PC-3 (cell line): ENCODE measurements at regions of chr15 and their contacts with region 1.

Region 1: DNA sequence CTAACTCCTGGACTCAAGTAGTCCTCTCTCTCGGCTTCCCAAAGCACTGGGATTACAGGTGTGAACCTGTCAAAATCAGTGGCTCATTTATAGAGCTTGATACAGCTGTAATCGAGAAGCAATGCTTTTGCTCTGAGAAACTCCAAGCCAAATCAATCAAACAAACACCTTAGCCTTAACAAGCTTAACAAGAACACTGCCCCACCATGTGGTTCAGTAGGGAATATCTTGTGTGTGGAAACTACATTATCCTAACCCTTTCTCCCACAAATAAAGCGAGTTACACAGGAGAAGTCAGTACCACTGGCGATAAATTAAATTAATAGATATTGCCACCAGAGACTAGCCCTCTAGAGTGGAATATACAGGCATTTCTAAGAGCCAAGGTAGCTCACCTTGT is 13.9 kb downstream of the CDAN1 start:
- DNase-seq: peak; percentile 21
- ATAC-seq: peak; percentile 42
- H3K4me3 ChIP-seq: no peak overlapping the region
- H3K27ac ChIP-seq: no peak overlapping the region
- H3K4me1 ChIP-seq: peaks cover 4% of the 10 kb centered on the region; the same call in 1 of the 2 replicates
- H3K27me3 ChIP-seq: no peaks in the 10 kb centered on the region
- CTCF ChIP-seq: peak; percentile 54

Region 2: GRCh38 chr15:42704492-42704926 is 18.5 kb before region 1 on chr15:
- CTCF ChIA-PET with region 1: interaction called, 4 read pairs
- POLR2A ChIA-PET with region 1: no interaction called
- intact Hi-C with region 1: loop called (anchors 1 kb)
- DNase-seq: peak; percentile 90
- ATAC-seq: peak; percentile 94
- H3K4me3 ChIP-seq: no peak overlapping the region
- H3K27ac ChIP-seq: no peak overlapping the region
- H3K4me1 ChIP-seq: peaks cover 22% of the 10 kb centered on the region
- H3K27me3 ChIP-seq: no peaks in the 10 kb centered on the region
- CTCF ChIP-seq: peak; percentile 97

Region 3: DNA sequence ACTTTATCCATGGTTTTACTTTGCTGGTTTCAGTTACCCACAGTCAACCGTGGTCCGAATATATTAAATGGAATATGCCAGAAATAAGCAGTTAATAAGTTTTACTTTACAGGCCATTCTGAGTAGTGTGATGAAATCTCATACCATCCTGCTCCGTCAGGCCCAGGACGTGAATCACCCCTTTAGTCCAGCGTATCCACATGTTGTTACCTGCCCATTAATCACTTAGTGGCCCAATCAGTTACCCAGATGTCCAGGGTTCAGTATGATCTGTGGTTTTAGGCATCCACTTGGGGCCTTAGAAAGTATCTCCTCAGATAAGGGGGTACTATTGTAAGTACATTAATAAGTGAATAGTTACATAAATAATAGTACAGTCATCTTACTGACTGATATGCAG is 109.5 kb after region 1 on chr15:
- CTCF ChIA-PET with region 1: no interaction called
- POLR2A ChIA-PET with region 1: no interaction called
- intact Hi-C with region 1: no loop called
- DNase-seq: peak; percentile 83
- ATAC-seq: peak; percentile 100
- H3K4me3 ChIP-seq: no peak overlapping the region
- H3K27ac ChIP-seq: 0 out of 2 replicates have a peak overlapping the region, but pooled peaks have one; percentile 2
- H3K4me1 ChIP-seq: peaks cover 9% of the 10 kb centered on the region
- H3K27me3 ChIP-seq: no peaks in the 10 kb centered on the region
- CTCF ChIP-seq: no peak